ENCODE measurements at regions of chr5 and their contacts with region 1.

Region 1: GRCh38 chr5:264346-264745 is 7.1 kb upstream of the PDCD6 start:
- DNase-seq: no peak
- ATAC-seq: no peak
- H3K4me3 ChIP-seq: no peak overlapping the region
- H3K27ac ChIP-seq: no peak overlapping the region
- H3K4me1 ChIP-seq: no peaks in the 10 kb centered on the region
- H3K27me3 ChIP-seq: no peaks in the 10 kb centered on the region
- CTCF ChIP-seq: no peak
- EP300 ChIP-seq: no peak
- POLR2A ChIP-seq: no peak
- RAD21 ChIP-seq: no peak

Region 2: GRCh38 chr5:197892-198489 is 66.4 kb before region 1 on chr5:
- CTCF ChIA-PET with region 1: no interaction called
- POLR2A ChIA-PET with region 1: no interaction called
- RAD21 ChIA-PET with region 1: no interaction called
- SMC1A ChIA-PET with region 1: no interaction called
- in situ Hi-C with region 1: no loop called
- intact Hi-C with region 1: no loop called
- DNase-seq: no peak
- ATAC-seq: no peak
- H3K4me3 ChIP-seq: no peak overlapping the region
- H3K27ac ChIP-seq: no peak overlapping the region
- H3K4me1 ChIP-seq: no peaks in the 10 kb centered on the region
- H3K27me3 ChIP-seq: no peaks in the 10 kb centered on the region
- CTCF ChIP-seq: no peak
- EP300 ChIP-seq: no peak
- POLR2A ChIP-seq: no peak
- RAD21 ChIP-seq: no peak

Region 3: DNA sequence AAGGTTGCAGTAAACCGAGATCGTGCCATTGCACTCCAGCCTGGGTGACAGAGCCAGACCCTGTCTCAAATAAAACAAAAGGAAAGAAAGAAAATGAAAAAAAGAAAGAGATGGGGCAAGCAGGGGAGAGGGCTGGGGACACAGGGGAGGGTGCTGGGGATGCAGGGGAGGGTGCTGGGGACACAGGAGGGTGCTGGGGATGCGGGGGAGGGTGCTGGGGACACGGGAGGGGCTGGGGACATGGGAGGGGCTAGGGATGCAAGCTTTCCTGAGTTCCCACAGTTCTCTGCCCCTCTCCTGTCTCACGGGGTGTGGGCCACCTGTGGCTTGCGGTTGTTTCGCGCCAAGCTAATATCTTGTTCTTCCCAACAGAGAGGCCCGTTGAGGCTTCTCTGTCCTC is 14.3 kb after region 1 on chr5:
- CTCF ChIA-PET with region 1: no interaction called
- POLR2A ChIA-PET with region 1: no interaction called
- RAD21 ChIA-PET with region 1: no interaction called
- SMC1A ChIA-PET with region 1: no interaction called
- in situ Hi-C with region 1: no loop called
- intact Hi-C with region 1: no loop called
- DNase-seq: no peak
- ATAC-seq: no peak
- H3K4me3 ChIP-seq: no peak overlapping the region
- H3K27ac ChIP-seq: no peak overlapping the region
- H3K4me1 ChIP-seq: no peaks in the 10 kb centered on the region
- H3K27me3 ChIP-seq: no peaks in the 10 kb centered on the region
- CTCF ChIP-seq: no peak
- EP300 ChIP-seq: no peak
- POLR2A ChIP-seq: no peak
- RAD21 ChIP-seq: no peak

Region 4: GRCh38 chr5:1568201-1568979 is 1304.0 kb after region 1 on chr5:
- CTCF ChIA-PET with region 1: no interaction called
- POLR2A ChIA-PET with region 1: no interaction called
- RAD21 ChIA-PET with region 1: no interaction called
- SMC1A ChIA-PET with region 1: no interaction called
- in situ Hi-C with region 1: loop called (anchors 5 kb)
- intact Hi-C with region 1: no loop called
- DNase-seq: no peak
- ATAC-seq: no peak
- H3K4me3 ChIP-seq: no peak overlapping the region
- H3K27ac ChIP-seq: no peak overlapping the region
- H3K4me1 ChIP-seq: no peaks in the 10 kb centered on the region
- H3K27me3 ChIP-seq: no peaks in the 10 kb centered on the region
- CTCF ChIP-seq: no peak
- EP300 ChIP-seq: no peak
- POLR2A ChIP-seq: no peak
- RAD21 ChIP-seq: no peak